Panc1 (cell line): ENCODE measurements at regions of chr12 and their contacts with region 1.

Region 1: GRCh38 chr12:1650260-1650977 is 21.4 kb downstream of the WNT5B start:
- DNase-seq: no peak
- ATAC-seq: no peak
- H3K4me3 ChIP-seq: no peak overlapping the region
- H3K27ac ChIP-seq: no peak overlapping the region
- H3K4me1 ChIP-seq: no peaks in the 10 kb centered on the region
- H3K27me3 ChIP-seq: no peaks in the 10 kb centered on the region
- CTCF ChIP-seq: no peak

Region 2: DNA sequence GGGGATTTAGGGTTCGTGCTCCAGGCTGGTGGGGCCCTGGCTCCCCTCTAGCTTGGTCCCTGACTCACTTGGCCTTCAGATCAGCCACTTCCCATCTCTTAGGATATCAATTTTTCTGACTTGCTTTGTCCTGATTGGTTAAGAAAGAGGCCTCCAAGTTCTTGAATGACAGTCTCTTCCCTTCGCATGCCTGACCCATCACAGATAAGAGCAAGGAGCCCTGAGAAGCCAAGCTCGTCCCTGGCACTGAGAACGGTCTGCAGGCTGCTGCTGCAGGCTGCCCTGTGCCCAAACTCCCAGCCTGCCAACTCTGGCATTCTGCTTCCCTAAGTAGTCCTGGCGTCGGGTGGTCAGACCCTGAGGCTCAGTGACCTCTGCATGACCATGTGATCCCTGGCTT is 169.2 kb after region 1 on chr12:
- CTCF ChIA-PET with region 1: interaction called, 11 read pairs
- POLR2A ChIA-PET with region 1: no interaction called
- in situ Hi-C with region 1: no loop called
- intact Hi-C with region 1: no loop called
- DNase-seq: no peak
- ATAC-seq: no peak
- H3K4me3 ChIP-seq: no peak overlapping the region
- H3K27ac ChIP-seq: no peak overlapping the region
- H3K4me1 ChIP-seq: no peaks in the 10 kb centered on the region
- H3K27me3 ChIP-seq: no peaks in the 10 kb centered on the region; the same call in 1 of the 2 replicates
- CTCF ChIP-seq: no peak